AG04449 (cell line): ENCODE measurements at regions of chr11 and their contacts with region 1.

Region 1: DNA sequence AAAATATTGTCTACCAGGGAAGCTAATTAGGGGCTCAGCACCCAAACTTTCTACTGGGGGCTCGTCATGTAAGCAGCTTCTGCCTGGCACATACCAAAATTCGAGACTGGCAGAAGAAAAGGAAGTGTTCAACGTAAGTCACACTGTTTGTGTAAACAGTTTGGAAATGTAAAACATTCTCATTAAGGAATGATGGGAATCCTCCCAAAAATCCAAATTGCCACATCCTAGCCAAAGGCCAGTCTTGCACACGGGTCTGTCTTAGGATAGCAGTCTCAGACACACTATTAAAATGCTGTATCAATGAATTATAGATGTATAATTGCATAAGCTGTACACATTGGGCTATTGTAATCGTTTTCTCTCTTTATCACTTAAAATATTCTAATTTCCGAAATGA is 28.9 kb downstream of the CUL5 start:
- DNase-seq: no peak
- H3K4me3 ChIP-seq: no peak overlapping the region
- CTCF ChIP-seq: no peak

Region 2: GRCh38 chr11:107757661-107758060 is 280.0 kb before region 1 on chr11:
- CTCF ChIA-PET with region 1: no interaction called
- POLR2A ChIA-PET with region 1: no interaction called
- DNase-seq: no peak
- H3K4me3 ChIP-seq: no peak overlapping the region
- CTCF ChIP-seq: no peak

Region 3: GRCh38 chr11:107951155-107951554 is 86.5 kb before region 1 on chr11:
- CTCF ChIA-PET with region 1: no interaction called
- POLR2A ChIA-PET with region 1: no interaction called
- DNase-seq: no peak
- H3K4me3 ChIP-seq: no peak overlapping the region
- CTCF ChIP-seq: no peak

Region 4: GRCh38 chr11:108025387-108026080 is 12.1 kb before region 1 on chr11:
- CTCF ChIA-PET with region 1: interaction called, 10 read pairs
- POLR2A ChIA-PET with region 1: no interaction called
- DNase-seq: no peak
- H3K4me3 ChIP-seq: no peak overlapping the region
- CTCF ChIP-seq: no peak